Ascending aorta (tissue), 2 donors: ENCODE measurements at regions of chr1 and their contacts with region 1.

Region 1: DNA sequence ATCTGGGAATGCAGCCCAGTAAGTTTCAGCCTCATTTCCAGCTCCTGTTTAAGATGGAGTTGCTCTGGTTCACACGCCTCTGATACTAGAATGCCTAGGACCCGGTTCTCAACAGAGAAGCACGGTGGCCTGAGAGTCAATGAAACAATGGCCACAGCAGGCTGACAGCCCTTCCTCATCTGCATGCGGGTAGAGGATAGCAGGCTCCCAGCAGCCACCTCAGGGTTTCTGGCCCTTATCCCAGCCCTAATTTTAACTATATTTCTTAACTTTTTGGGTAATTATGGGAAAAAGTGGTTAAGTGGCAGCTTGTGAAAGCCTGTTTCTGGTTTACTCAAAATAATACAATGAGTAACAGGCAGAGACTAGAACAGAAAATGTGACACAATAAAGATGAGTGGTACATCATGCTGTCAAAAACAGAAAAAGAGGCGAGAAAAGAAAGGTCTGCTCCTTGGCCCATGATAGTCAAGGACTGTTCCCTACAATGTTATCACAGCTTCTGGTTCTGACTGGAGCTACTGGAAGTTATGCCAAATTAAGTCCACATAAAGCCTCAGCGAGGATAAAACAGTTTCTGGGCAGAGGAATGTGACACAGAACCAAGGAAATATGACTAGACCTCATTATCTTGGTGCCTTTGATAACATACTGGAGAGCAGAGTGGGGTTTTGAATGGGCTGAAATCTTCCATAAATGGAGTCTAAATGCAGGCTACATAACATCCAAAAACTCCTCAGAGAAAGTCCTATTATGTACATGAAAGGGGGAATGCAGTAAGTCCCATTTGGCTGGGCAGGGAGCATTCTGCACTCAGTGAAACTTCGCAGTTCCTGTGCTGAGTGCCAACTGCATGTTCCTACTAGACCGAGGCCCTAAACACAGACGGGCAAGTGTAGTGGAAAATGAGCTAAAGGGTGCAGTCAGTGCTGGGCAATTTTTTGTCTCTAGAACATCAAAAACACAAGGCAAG is 92.1 kb downstream of the NIBAN1 start:
- DNase-seq: peak; percentile 45 to 89
- H3K4me3 ChIP-seq: peak overlapping the region in 1 of 2 donors; percentile 7
- H3K27ac ChIP-seq: peak overlapping the region; percentile 86 to 93
- H3K4me1 ChIP-seq: peaks cover 8 to 75% of the 10 kb centered on the region in 2 donors
- H3K27me3 ChIP-seq: no peaks in the 10 kb centered on the region
- CTCF ChIP-seq: no peak

Region 2: DNA sequence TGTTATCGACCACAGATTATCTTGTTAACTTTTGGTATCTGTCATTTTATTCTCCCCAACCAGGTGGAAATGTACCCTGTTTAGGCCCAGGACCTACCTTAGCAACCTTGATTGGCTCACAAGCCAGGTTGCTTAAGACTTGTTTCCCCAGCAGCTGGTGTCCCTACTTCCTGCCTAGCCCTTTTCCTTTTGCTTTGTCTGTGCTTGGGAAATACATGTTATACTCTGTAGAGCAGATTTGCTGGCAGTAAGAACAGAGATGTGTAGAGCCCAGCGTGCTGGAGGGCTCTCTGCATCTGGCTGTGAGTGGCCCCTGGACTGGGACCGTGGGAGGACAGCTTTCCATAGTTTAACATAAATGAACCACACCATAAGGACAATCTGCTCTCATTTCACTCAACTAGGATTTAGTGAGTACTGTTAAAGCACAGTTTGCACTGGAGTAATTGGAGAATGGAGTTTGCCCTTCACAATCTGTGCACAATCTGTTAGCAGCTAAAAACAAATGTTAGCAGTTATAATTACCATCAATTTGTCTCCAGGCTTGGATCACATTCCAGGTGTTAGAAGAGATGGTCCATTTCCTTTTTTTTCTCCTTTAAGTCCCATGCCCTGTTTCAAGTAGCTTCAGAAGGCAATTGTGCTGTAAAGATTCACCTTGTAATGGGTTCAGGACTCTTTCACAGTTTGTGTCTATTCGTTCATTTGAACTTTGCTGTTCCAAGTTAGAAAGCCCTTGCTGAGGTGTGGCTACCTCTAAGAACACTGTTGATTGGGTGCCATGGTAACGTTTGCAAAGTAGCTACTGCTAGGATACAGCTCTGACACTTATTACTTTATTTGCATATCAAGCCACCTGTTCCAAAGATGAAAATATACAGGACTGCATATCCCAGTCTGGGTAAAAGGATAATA is 1229.4 kb before region 1 on chr1 and contains the start of gene APOBEC4:
- intact Hi-C with region 1: no loop called
- DNase-seq: no peak
- H3K4me3 ChIP-seq: no peak within 1 kb of the TSS
- H3K27ac ChIP-seq: no peak within 1 kb of the TSS
- H3K4me1 ChIP-seq: peaks cover 0 to 2% of the 10 kb centered on the region in 2 donors
- H3K27me3 ChIP-seq: no peaks in the 10 kb centered on the region
- CTCF ChIP-seq: no peak
- total RNA-seq, gene APOBEC4: not detected

Region 3: GRCh38 chr1:184827600-184828368 is 54.4 kb before region 1 on chr1:
- intact Hi-C with region 1: loop called (anchors 2 kb)
- DNase-seq: peak in 1 of 2 donors; percentile 73
- H3K4me3 ChIP-seq: no peak overlapping the region
- H3K27ac ChIP-seq: peak overlapping the region; percentile 85 to 88
- H3K4me1 ChIP-seq: peaks cover 6 to 71% of the 10 kb centered on the region in 2 donors
- H3K27me3 ChIP-seq: no peaks in the 10 kb centered on the region
- CTCF ChIP-seq: no peak

Region 4: DNA sequence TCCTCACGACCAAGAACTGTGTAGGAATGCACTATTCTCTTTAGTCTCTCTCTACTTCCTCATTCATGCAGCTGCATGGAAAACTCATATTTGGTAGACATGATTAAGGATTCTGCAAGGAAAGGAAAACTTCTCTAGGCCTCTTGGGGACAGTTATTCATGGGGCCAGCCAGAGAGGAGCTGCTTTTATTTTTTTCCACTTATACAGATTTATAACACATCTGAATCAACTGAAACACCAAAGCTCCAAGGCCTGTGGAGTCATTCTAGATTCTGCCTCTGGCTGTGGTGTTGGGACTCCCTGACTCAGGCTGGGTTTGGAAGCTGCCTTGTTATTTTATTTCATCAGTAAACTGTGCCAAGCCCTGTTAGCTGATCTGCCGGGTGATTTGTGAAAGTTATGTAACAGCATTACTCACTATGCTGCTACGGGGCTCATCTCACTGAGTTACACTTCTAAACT is 43.7 kb before region 1 on chr1:
- intact Hi-C with region 1: loop called (anchors 1 kb)
- DNase-seq: peak; percentile 42 to 90
- H3K4me3 ChIP-seq: no peak overlapping the region
- H3K27ac ChIP-seq: peak overlapping the region; percentile 67 to 81
- H3K4me1 ChIP-seq: peaks cover 4 to 27% of the 10 kb centered on the region in 2 donors
- H3K27me3 ChIP-seq: no peaks in the 10 kb centered on the region
- CTCF ChIP-seq: no peak

Region 5: GRCh38 chr1:184866991-184867788 is 15.0 kb before region 1 on chr1:
- intact Hi-C with region 1: no loop called
- DNase-seq: no peak
- H3K4me3 ChIP-seq: no peak overlapping the region
- H3K27ac ChIP-seq: peak overlapping the region; percentile 69 to 81
- H3K4me1 ChIP-seq: peaks cover 7 to 26% of the 10 kb centered on the region in 2 donors
- H3K27me3 ChIP-seq: no peaks in the 10 kb centered on the region
- CTCF ChIP-seq: no peak